Vagina (tissue), 2 donors: ENCODE measurements at regions of chr10 and their contacts with region 1.

Region 1: DNA sequence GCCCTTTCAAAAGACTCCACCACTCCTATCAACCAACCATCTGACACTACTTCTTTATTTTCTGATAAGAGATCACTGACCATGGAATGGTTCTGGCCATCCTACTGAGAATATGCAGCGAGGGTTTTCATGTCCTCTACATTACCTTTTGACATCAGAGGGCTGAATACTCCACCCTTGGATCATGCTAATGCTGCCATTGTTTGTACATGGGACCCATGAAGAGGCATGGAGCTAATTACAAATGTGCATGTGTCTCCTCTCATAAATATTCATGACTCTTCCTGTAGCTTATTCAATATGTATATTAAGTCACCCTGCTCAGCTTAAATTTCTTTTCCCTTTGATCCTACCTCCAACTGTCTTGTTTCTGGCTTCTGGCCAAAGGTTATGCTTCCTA is 1065.8 kb upstream of the GHITM start:
- DNase-seq: no peak
- H3K4me3 ChIP-seq: no peak overlapping the region
- H3K27ac ChIP-seq: no peak overlapping the region
- H3K4me1 ChIP-seq: no peaks in the 10 kb centered on the region
- H3K27me3 ChIP-seq: no peaks in the 10 kb centered on the region
- CTCF ChIP-seq: no peak
- POLR2A ChIP-seq: no peak

Region 2: GRCh38 chr10:83012866-83013265 is 60.6 kb before region 1 on chr10:
- intact Hi-C with region 1: no loop called
- DNase-seq: no peak
- H3K4me3 ChIP-seq: no peak overlapping the region
- H3K27ac ChIP-seq: no peak overlapping the region
- H3K4me1 ChIP-seq: no peaks in the 10 kb centered on the region
- H3K27me3 ChIP-seq: no peaks in the 10 kb centered on the region
- CTCF ChIP-seq: no peak
- POLR2A ChIP-seq: no peak

Region 3: DNA sequence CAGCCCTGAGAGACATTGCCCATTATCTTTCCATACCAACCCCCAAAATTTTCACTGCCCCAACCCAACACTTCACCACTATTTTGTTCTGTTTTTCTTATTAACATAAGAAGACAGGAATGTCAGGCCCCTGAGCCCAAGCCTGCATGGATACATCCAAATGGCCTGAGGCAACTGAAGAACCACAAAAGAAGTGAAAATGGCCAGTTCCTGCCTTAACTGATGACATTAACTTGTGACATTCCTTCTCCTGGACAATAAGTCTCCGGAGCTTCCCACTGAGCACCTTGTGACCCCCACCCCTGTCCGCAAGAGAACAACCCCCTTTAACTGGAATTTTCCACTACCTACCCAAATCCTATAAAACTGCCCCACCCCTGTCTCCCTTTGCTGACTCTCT is 10.6 kb before region 1 on chr10:
- intact Hi-C with region 1: loop called (anchors 2 kb)
- DNase-seq: no peak
- H3K4me3 ChIP-seq: no peak overlapping the region
- H3K27ac ChIP-seq: no peak overlapping the region
- H3K4me1 ChIP-seq: no peaks in the 10 kb centered on the region
- H3K27me3 ChIP-seq: no peaks in the 10 kb centered on the region
- CTCF ChIP-seq: no peak
- POLR2A ChIP-seq: no peak

Region 4: DNA sequence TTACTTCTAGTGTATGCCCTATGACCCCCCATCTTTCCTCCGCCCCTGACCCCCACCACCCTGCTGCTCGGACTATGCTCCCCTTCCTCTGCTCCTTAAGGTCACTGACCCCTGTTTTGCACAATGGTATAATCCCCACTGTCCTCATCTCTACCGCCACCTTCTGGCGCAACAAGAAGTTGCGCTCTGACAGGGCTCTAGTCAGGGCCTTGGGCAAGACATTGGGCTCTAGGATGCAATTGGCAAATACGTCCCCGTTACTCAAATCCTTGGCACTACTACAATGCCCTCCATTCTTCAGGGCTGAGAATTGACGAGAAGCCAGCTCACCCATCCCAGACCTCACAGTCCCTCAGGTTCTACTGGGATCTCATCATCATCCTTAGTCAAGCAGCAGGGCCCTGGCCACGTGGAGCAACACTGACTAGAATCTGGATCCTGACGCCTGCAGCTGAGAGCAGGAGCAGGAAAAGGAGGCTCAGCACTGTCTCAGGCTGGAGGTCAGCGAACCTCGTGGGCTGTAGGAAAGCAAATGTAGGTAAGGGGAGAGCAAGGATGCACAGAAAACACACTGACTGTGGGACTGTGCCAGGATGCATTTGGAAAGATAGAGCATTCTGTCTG is 1141.3 kb after region 1 on chr10:
- intact Hi-C with region 1: no loop called
- DNase-seq: no peak
- H3K4me3 ChIP-seq: no peak overlapping the region
- H3K27ac ChIP-seq: no peak overlapping the region
- H3K4me1 ChIP-seq: no peaks in the 10 kb centered on the region
- H3K27me3 ChIP-seq: no peaks in the 10 kb centered on the region
- CTCF ChIP-seq: no peak
- POLR2A ChIP-seq: no peak